ENCODE measurements at regions of chr5 and their contacts with region 1.

Region 1: GRCh38 chr5:140575309-140575708 is 10.7 kb downstream of the SLC35A4 start:
- DNase-seq: peak; percentile 26
- ATAC-seq: peak; percentile 52; the same call in 1 of the 2 replicates
- H3K4me3 ChIP-seq: no peak overlapping the region
- H3K27ac ChIP-seq: no peak overlapping the region
- H3K4me1 ChIP-seq: peaks cover 5% of the 10 kb centered on the region; the same call in 1 of the 2 replicates
- H3K27me3 ChIP-seq: no peaks in the 10 kb centered on the region
- CTCF ChIP-seq: peak; percentile 45; the same call in 1 of the 2 replicates
- POLR2A ChIP-seq: no peak
- RAD21 ChIP-seq: peak; percentile 48; the same call in 1 of the 2 replicates

Region 2: DNA sequence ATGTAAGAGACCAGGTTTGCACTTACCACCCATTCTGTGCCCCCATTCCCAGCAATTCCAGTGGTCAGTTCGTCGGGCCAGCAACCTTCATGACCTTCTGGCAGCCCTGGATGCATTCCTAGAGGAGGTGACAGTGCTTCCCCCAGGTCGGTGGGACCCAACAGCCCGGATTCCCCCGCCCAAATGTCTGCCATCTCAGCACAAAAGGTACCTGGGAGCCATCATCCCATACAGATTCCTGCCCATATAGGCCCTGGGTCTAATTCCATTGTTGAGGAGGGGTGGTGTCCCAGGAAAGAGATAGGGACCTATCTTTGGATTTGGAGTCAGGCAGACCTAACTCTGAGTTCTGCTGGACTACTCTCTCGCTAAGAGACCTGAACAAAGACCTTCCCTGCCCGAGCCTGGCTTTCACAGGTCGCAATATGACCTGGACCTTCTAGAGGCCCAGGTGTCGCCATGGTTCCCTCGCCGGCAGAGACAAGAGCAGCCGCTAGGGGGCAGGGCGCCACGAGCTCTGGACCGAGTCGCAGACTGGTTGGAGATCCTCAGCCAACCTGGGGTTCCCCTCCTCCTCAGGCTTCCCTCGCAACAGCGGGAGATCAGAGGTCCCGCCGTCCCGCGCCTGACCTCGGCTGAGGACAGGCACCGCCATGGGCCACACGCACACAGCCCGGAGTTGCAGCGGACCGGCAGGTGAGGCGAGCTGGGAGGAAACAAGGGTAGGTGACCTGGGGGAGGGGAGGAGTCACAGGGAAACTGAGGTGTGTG is 212.3 kb before region 1 on chr5:
- CTCF ChIA-PET with region 1: no interaction called
- POLR2A ChIA-PET with region 1: no interaction called
- dilution Hi-C with region 1: no loop called
- in situ Hi-C with region 1: no loop called
- intact Hi-C with region 1: no loop called
- DNase-seq: peak; percentile 46
- ATAC-seq: peak; percentile 91
- H3K4me3 ChIP-seq: peak overlapping the region; percentile 26
- H3K27ac ChIP-seq: no peak overlapping the region
- H3K4me1 ChIP-seq: no peaks in the 10 kb centered on the region
- H3K27me3 ChIP-seq: peaks cover 17% of the 10 kb centered on the region; the same call in 1 of the 2 replicates
- CTCF ChIP-seq: peak; percentile 85
- POLR2A ChIP-seq: no peak
- RAD21 ChIP-seq: peak; percentile 58

Region 3: GRCh38 chr5:140611020-140611521 is 35.8 kb after region 1 on chr5:
- CTCF ChIA-PET with region 1: no interaction called
- POLR2A ChIA-PET with region 1: no interaction called
- dilution Hi-C with region 1: no loop called
- in situ Hi-C with region 1: loop called (anchors 5 kb)
- intact Hi-C with region 1: no loop called
- DNase-seq: peak; percentile 20
- ATAC-seq: no peak
- H3K4me3 ChIP-seq: no peak overlapping the region
- H3K27ac ChIP-seq: no peak overlapping the region
- H3K4me1 ChIP-seq: peaks cover 2% of the 10 kb centered on the region; the same call in 1 of the 2 replicates
- H3K27me3 ChIP-seq: peaks cover 6% of the 10 kb centered on the region
- CTCF ChIP-seq: no peak
- POLR2A ChIP-seq: no peak
- RAD21 ChIP-seq: no peak

Measured in IMR-90 (cell line).